Heart right ventricle (tissue), 16 donors: ENCODE measurements at regions of chr1 and their contacts with region 1.

Region 1: GRCh38 chr1:115251856-115252255 is 86.2 kb downstream of the NGF start:
- DNase-seq: no peak
- ATAC-seq: peak; percentile 85 to 93 (median 90)
- H3K4me3 ChIP-seq: no peak overlapping the region
- H3K27ac ChIP-seq: peak overlapping the region in 8 of 10 donors; percentile 25 to 83 (median 71)
- H3K4me1 ChIP-seq: peaks cover 5 to 21% (median 15%) of the 10 kb centered on the region in 9 donors
- H3K27me3 ChIP-seq: no peaks in the 10 kb centered on the region
- CTCF ChIP-seq: no peak

Region 2: GRCh38 chr1:115189814-115190539 is 61.9 kb before region 1 on chr1:
- intact Hi-C with region 1: loop called in 1 of 10 experiments (anchors 10 kb)
- DNase-seq: no peak
- ATAC-seq: peak; percentile 36 to 90 (median 61)
- H3K4me3 ChIP-seq: no peak overlapping the region
- H3K27ac ChIP-seq: peak overlapping the region in 7 of 10 donors; percentile 1 to 71 (median 68)
- H3K4me1 ChIP-seq: peaks cover 5 to 46% (median 22%) of the 10 kb centered on the region in 9 donors
- H3K27me3 ChIP-seq: no peaks in the 10 kb centered on the region
- CTCF ChIP-seq: no peak